Transverse colon (tissue), 4 donors: ENCODE measurements at regions of chr5 and their contacts with region 1.

Region 1: GRCh38 chr5:77491783-77492652 is at the start of gene WDR41:
- DNase-seq: peak; percentile 91
- H3K4me3 ChIP-seq: peak within 1 kb of the TSS; percentile 36 to 82 (median 72)
- H3K27ac ChIP-seq: peak within 1 kb of the TSS; percentile 90 to 96 (median 92)
- H3K4me1 ChIP-seq: peaks cover 0 to 17% (median 8%) of the 10 kb centered on the region in 4 donors
- H3K27me3 ChIP-seq: peaks cover 13% of the 10 kb centered on the region
- CTCF ChIP-seq: peak; percentile 68 to 96 (median 91)
- EP300 ChIP-seq: no peak
- POLR2A ChIP-seq: peak; percentile 74
- total RNA-seq, gene WDR41: 1.1 to 33.7 (median 21.2) TPM

Region 2: GRCh38 chr5:77143998-77144836 is 347.8 kb before region 1 on chr5:
- in situ Hi-C with region 1: loop called in 2 of 4 experiments (anchors 25 kb)
- intact Hi-C with region 1: loop called (anchors 10 kb)
- DNase-seq: peak; percentile 71
- H3K4me3 ChIP-seq: no peak overlapping the region
- H3K27ac ChIP-seq: no peak overlapping the region
- H3K4me1 ChIP-seq: no peaks in the 10 kb centered on the region
- H3K27me3 ChIP-seq: no peaks in the 10 kb centered on the region
- CTCF ChIP-seq: peak; percentile 67 to 79 (median 77)
- EP300 ChIP-seq: no peak
- POLR2A ChIP-seq: no peak

Region 3: DNA sequence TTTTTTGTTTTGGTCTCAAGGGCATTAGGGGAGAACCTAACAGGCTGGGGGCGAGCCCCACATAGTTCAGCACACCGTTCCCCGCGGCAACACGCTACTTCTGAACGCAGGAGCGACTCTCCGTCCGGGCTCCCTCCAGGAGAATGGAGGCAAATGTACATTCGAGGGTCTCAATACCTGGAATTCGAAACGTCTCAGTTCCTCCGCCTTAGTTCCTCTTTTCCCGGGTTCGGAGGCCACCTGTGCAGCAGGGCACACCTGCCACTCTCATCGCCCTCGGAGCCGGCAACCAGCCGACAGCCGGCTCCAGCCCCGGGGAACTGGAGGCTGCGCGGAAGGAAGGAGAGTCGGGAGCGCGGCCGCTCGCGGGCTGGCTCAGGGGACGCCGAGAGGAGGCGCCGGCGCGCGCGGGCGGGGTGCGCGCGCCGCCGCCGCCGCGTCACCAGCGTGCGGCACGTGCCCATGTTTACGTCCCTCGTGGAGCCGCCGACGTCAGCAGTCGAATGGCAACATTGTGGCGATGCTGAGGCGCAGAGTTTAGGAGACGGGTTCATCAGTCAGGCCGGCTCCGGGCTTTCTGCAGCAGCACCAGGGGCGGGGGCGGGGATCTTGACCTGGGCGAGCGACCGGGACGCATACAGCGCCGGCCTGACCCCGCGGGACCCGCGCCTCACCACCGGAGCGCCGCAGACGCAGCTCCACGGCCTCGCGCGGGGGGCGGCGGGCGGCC is 1743.8 kb after region 1 on chr5 and contains the start of gene JMY:
- in situ Hi-C with region 1: no loop called
- intact Hi-C with region 1: loop called (anchors 5 kb)
- DNase-seq: peak; percentile 90
- H3K4me3 ChIP-seq: peak within 1 kb of the TSS; percentile 69 to 93 (median 74)
- H3K27ac ChIP-seq: peak within 1 kb of the TSS; percentile 92 to 96 (median 94)
- H3K4me1 ChIP-seq: peaks cover 4 to 38% (median 14%) of the 10 kb centered on the region in 4 donors
- H3K27me3 ChIP-seq: no peaks in the 10 kb centered on the region
- CTCF ChIP-seq: no peak
- EP300 ChIP-seq: no peak
- POLR2A ChIP-seq: peak; percentile 80
- total RNA-seq, gene JMY: 7.8 to 25.1 (median 14.7) TPM